ENCODE measurements at regions of chr3 and their contacts with region 1.

Region 1: GRCh38 chr3:183789826-183790225 is 35.6 kb downstream of the MAP6D1 start:
- DNase-seq: peak in 1 of 9 experiments; percentile 16
- ATAC-seq: no peak
- H3K4me3 ChIP-seq: no peak overlapping the region
- H3K4me3 Mint-ChIP-seq: no peak overlapping the region
- H3K27ac ChIP-seq: no peak overlapping the region
- H3K27ac Mint-ChIP-seq: peak overlapping the region; percentile 65
- H3K4me1 ChIP-seq: peaks cover 3% of the 10 kb centered on the region
- H3K4me1 Mint-ChIP-seq: peaks cover 11% of the 10 kb centered on the region
- H3K27me3 ChIP-seq: no peaks in the 10 kb centered on the region
- H3K27me3 Mint-ChIP-seq: no peaks in the 10 kb centered on the region
- CTCF ChIP-seq: no peak

Region 2: GRCh38 chr3:185711255-185711870 is 1921.5 kb after region 1 on chr3:
- CTCF ChIA-PET with region 1: no interaction called
- POLR2A ChIA-PET with region 1: no interaction called
- intact Hi-C with region 1: loop called in 1 of 2 experiments (anchors 5 kb)
- DNase-seq: no peak
- ATAC-seq: no peak
- H3K4me3 ChIP-seq: no peak overlapping the region
- H3K4me3 Mint-ChIP-seq: no peak overlapping the region
- H3K27ac ChIP-seq: no peak overlapping the region
- H3K27ac Mint-ChIP-seq: no peak overlapping the region
- H3K4me1 ChIP-seq: no peaks in the 10 kb centered on the region
- H3K4me1 Mint-ChIP-seq: no peaks in the 10 kb centered on the region
- H3K27me3 ChIP-seq: no peaks in the 10 kb centered on the region
- H3K27me3 Mint-ChIP-seq: peaks cover 5% of the 10 kb centered on the region
- CTCF ChIP-seq: no peak